CD8-positive, alpha-beta memory T cell (primary cell): ENCODE measurements at regions of chr12 and their contacts with region 1.

Region 1: DNA sequence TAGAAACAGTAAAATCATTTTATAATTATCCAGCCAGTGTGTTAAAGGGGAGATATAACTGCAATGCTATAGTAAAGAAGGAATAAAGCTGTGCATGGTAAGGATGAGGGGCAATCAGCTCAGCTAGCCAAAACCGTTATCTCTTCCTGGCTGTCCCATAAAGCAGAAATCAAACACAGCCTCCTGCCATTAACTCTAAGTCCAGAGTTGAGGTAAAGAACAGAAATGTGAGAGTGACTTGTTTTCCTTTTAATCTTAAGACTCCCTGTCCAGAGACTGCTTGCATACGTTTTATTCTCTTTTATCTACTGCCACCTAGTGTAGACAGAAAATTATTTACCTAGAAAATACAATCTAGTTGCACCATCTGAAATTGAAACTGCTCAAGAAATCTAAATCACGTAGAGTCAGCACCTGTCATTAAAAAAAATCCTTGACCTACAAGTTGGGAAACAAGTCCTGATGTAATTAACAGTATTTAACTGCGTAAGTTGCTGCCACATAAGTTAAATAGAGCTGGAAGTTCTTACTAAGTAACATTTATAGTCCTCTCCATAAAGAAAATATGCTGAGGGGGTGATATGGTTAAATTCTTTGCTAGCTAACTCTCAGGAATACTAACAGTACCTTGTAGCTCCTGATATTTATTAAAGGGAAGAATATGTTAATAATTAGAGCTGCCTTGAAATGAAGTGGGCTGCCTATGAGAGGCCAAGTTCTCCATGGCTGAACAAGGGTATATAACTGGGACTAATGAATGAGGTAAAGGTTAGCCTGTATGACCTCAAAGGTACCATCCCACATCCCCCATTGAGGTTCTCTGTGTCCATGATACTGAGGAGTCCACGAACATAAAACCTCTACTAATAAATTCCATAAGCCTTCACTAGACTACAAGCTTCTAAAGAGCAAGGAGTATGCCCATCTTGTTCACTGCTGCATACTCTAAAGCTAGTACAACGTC is 62.7 kb downstream of the GALNT4 start:
- DNase-seq: peak in 2 of 5 donors; percentile 46 to 55
- H3K4me3 ChIP-seq: no peak overlapping the region
- H3K4me3 Mint-ChIP-seq: peak overlapping the region in 6 of 7 donors; percentile 14 to 71 (median 60)
- H3K27ac ChIP-seq: no peak overlapping the region
- H3K27ac Mint-ChIP-seq: peak overlapping the region in 6 of 8 donors; percentile 2 to 88 (median 72)
- H3K4me1 ChIP-seq: no peaks in the 10 kb centered on the region
- H3K4me1 Mint-ChIP-seq: peaks cover 23 to 35% (median 28%) of the 10 kb centered on the region in 3 donors
- H3K27me3 ChIP-seq: no peaks in the 10 kb centered on the region
- H3K27me3 Mint-ChIP-seq: no peaks in the 10 kb centered on the region

Region 2: DNA sequence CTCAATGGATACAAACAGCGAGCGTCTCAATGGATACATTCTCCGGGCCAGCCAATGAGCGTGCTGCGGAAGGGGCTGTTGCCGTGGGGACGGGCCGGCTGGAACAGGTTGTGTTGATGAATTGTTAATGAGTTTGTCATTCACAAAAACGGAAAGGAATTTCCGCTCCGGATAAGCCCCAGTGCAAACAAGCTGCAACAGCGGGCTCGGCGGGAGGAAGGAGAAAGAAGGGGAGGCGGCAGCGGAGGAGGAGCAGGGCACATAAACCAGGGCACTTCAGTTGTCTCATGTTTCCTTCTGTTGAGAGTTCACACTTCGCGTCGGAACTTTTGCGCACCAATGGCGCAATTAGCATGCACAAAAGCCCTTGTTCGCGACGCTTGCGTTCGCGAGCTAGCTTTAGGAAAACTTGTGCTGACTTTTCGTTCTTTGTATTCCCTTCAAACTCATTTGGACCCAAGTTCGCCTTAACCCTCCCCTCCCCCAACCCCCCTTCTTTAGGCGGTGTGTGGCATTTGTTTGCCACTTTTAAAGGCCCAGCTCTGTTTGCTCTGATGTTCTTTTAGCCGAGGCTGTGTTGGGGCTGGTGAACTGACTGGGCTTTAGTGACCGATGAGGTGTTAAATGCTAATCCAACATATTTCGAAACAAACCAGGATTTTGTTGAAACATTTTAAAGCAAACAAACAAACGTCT is 109.3 kb before region 1 on chr12 and contains the start of gene DUSP6:
- CTCF ChIA-PET with region 1: interaction called, 10 read pairs
- POLR2A ChIA-PET with region 1: no interaction called
- DNase-seq: peak; percentile 68 to 90 (median 76)
- H3K4me3 ChIP-seq: peak within 1 kb of the TSS; percentile 66
- H3K4me3 Mint-ChIP-seq: peak within 1 kb of the TSS; percentile 87 to 96 (median 94)
- H3K27ac ChIP-seq: peak within 1 kb of the TSS; percentile 79
- H3K27ac Mint-ChIP-seq: peak within 1 kb of the TSS; percentile 77 to 96 (median 94)
- H3K4me1 ChIP-seq: peaks cover 30% of the 10 kb centered on the region
- H3K4me1 Mint-ChIP-seq: peaks cover 41 to 68% (median 61%) of the 10 kb centered on the region in 3 donors
- H3K27me3 ChIP-seq: no peaks in the 10 kb centered on the region
- H3K27me3 Mint-ChIP-seq: no peaks in the 10 kb centered on the region
- total RNA-seq, gene DUSP6: 23.4 to 24.8 TPM

Region 3: GRCh38 chr12:89451841-89452251 is 10.1 kb before region 1 on chr12:
- CTCF ChIA-PET with region 1: interaction called, 12 read pairs
- POLR2A ChIA-PET with region 1: no interaction called
- DNase-seq: no peak
- H3K4me3 ChIP-seq: no peak overlapping the region
- H3K4me3 Mint-ChIP-seq: no peak overlapping the region
- H3K27ac ChIP-seq: no peak overlapping the region
- H3K27ac Mint-ChIP-seq: no peak overlapping the region
- H3K4me1 ChIP-seq: no peaks in the 10 kb centered on the region
- H3K4me1 Mint-ChIP-seq: peaks cover 24 to 28% (median 26%) of the 10 kb centered on the region in 3 donors
- H3K27me3 ChIP-seq: no peaks in the 10 kb centered on the region
- H3K27me3 Mint-ChIP-seq: no peaks in the 10 kb centered on the region

Region 4: GRCh38 chr12:89524541-89525285 is 62.8 kb after region 1 on chr12 and contains the start of gene GALNT4:
- CTCF ChIA-PET with region 1: interaction called, 78 read pairs
- POLR2A ChIA-PET with region 1: no interaction called
- DNase-seq: peak; percentile 53 to 84 (median 73)
- H3K4me3 ChIP-seq: peak within 1 kb of the TSS; percentile 87
- H3K4me3 Mint-ChIP-seq: peak within 1 kb of the TSS; percentile 92 to 99 (median 96)
- H3K27ac ChIP-seq: peak within 1 kb of the TSS; percentile 84
- H3K27ac Mint-ChIP-seq: peak within 1 kb of the TSS; percentile 85 to 98 (median 94)
- H3K4me1 ChIP-seq: peaks cover 40% of the 10 kb centered on the region
- H3K4me1 Mint-ChIP-seq: peaks cover 55 to 68% (median 65%) of the 10 kb centered on the region in 3 donors
- H3K27me3 ChIP-seq: no peaks in the 10 kb centered on the region
- H3K27me3 Mint-ChIP-seq: no peaks in the 10 kb centered on the region
- total RNA-seq, gene GALNT4: 5.8 to 6.5 TPM

Region 5: DNA sequence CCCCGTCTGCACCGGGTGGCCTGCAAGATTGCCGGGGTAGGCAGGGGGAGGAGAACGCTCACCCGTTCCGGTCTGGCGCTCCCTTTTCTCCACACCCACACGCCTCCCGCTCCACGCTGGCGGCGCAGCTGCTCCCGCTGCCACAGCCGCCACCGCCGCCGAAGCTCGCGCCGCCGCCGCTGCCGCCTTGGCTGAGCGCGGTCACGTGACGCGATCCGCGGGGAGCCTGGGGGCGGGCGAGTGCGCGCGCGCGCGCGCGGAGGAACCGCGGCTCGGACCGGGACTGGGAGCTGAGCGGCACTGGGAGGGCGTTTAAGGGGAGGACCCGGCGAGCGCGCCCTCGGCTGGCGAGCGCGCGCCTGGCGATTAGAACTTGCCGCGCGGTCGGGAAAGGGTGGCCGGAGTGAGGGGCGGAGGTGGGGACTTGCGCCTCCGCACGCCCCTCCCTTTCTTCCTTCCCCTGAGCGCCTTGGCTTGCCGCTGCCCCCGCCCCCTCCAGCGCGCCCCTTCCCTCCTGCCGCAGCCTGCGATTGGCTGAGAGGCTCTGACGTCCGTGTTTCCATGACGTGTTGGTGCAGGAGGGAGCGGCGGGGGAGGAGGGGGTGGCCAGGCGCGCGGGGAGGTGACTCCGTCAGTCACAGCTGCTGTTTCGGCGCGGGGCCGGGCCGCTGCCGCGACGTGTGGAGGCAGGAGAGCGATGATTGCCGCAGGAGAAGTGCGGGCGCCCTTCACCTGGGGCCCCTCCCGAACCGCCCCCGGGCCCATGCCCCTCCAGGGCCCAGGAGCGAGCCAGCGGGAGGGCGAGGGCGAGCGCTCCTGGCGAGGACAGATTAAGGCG is 247.4 kb after region 1 on chr12:
- CTCF ChIA-PET with region 1: no interaction called
- POLR2A ChIA-PET with region 1: no interaction called
- DNase-seq: peak; percentile 97 to 100 (median 99)
- H3K4me3 ChIP-seq: peak overlapping the region; percentile 81
- H3K4me3 Mint-ChIP-seq: peak overlapping the region; percentile 85 to 97 (median 94)
- H3K27ac ChIP-seq: peak overlapping the region; percentile 97
- H3K27ac Mint-ChIP-seq: peak overlapping the region; percentile 92 to 99 (median 97)
- H3K4me1 ChIP-seq: peaks cover 34% of the 10 kb centered on the region
- H3K4me1 Mint-ChIP-seq: peaks cover 37 to 53% (median 41%) of the 10 kb centered on the region in 3 donors
- H3K27me3 ChIP-seq: no peaks in the 10 kb centered on the region
- H3K27me3 Mint-ChIP-seq: peaks cover 0 to 8% of the 10 kb centered on the region in 2 donors